A673 (cell line): ENCODE measurements at regions of chr10 and their contacts with region 1.

Region 1: DNA sequence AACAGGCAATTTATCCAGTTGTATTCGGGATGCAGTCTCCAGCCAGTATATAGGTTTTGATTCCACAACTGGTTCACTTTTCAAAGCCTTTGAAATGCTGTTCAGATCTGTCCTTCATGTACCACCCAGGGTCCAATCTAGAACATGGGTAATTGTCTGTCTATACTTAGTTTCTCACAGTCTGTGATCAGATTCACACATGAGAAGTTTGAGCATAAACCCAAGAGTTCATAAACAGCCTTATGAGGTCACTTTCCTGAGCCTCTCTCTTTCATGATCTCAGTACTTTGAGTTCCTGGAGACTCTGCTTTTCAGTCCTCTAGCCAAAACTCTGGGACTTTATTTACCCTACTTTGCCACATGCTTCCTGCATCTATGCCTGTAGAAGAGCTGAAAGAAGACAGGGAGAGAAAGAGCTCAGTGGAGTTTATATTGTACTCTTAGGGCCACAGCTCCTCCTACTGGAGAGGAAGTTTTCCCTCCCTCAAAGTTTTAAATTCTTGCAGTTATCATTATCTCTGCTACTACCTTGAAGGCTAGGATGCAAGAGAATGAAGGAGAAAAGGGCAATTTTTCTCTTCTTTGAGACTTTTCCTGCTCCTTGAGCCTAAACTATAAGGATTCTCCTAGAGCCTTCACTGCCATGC is 172.0 kb downstream of the ZEB1 start:
- DNase-seq: peak; percentile 62
- H3K4me3 ChIP-seq: no peak overlapping the region
- H3K27ac ChIP-seq: no peak overlapping the region
- H3K4me1 ChIP-seq: no peaks in the 10 kb centered on the region
- H3K27me3 ChIP-seq: no peaks in the 10 kb centered on the region
- CTCF ChIP-seq: peak; percentile 67

Region 2: DNA sequence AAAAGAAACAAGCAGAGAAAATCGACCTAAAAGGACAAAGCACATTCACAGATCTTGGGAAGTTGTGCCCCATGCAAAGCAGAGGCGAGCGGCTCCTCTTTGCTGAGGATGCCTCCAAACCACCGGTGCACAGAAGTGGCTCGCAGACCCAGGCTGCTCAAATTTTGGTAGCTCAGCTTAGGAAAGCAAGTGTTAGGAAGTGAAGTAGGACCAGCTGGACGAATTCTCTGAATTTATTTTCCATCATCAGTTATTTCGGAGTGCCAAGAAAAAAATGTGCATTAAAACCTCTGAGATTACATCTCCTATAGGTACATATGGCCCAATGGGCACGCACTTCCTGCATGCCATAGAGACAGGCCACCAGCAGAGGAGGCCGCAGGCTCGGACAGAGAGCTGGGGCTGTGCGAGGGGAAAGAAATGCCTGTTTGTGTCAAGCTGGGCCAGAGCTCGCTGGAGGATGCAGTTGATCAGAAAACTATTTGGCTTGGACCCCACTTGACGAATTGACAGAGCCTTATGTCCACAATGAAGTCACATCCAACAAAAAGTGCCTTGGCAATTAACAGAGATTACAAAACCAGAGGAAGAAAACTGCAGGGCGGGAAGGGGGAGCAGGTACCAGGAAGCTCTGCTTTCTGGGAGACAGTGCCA is 739.2 kb before region 1 on chr10:
- CTCF ChIA-PET with region 1: interaction called, 17 read pairs
- POLR2A ChIA-PET with region 1: no interaction called
- intact Hi-C with region 1: loop called (anchors 10 kb)
- DNase-seq: peak; percentile 80
- H3K4me3 ChIP-seq: no peak overlapping the region
- H3K27ac ChIP-seq: no peak overlapping the region
- H3K4me1 ChIP-seq: no peaks in the 10 kb centered on the region
- H3K27me3 ChIP-seq: no peaks in the 10 kb centered on the region
- CTCF ChIP-seq: peak; percentile 97

Region 3: DNA sequence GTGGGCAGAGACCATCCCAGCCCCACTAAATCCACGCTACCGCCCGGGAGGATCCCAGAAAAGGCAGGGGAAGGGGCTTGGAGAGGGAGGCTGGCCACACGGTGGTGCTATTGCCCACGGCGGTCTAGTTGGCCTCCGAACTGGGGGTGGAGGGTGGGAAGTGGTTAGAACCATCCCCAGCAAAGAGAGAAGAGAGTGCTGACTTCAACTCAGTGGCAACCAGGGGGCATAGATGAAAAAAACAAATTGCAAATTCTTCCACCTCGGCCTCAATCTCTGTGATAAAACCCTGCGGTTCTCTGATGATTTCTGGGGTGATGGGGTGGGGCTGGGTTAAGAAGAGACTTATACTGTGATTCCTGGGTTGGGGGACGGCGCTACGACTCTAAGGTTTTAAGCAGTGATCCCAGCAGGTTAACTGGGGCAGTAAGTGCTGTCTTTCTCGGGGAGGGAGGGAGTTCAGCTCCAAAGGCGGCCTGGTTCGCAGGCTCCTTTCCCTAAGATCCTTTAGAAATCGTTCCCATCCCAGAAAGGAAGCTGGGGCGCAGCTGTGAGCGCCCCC is 707.0 kb before region 1 on chr10:
- CTCF ChIA-PET with region 1: interaction called, 12 read pairs
- POLR2A ChIA-PET with region 1: no interaction called
- intact Hi-C with region 1: loop called (anchors 1 kb)
- DNase-seq: peak; percentile 88
- H3K4me3 ChIP-seq: peak overlapping the region; percentile 56
- H3K27ac ChIP-seq: no peak overlapping the region
- H3K4me1 ChIP-seq: no peaks in the 10 kb centered on the region
- H3K27me3 ChIP-seq: no peaks in the 10 kb centered on the region
- CTCF ChIP-seq: peak; percentile 94

Region 4: GRCh38 chr10:31083765-31084184 is 407.2 kb before region 1 on chr10:
- CTCF ChIA-PET with region 1: no interaction called
- POLR2A ChIA-PET with region 1: no interaction called
- intact Hi-C with region 1: loop called (anchors 2 kb)
- DNase-seq: peak; percentile 79
- H3K4me3 ChIP-seq: no peak overlapping the region
- H3K27ac ChIP-seq: no peak overlapping the region
- H3K4me1 ChIP-seq: no peaks in the 10 kb centered on the region
- H3K27me3 ChIP-seq: no peaks in the 10 kb centered on the region
- CTCF ChIP-seq: peak; percentile 73

Region 5: DNA sequence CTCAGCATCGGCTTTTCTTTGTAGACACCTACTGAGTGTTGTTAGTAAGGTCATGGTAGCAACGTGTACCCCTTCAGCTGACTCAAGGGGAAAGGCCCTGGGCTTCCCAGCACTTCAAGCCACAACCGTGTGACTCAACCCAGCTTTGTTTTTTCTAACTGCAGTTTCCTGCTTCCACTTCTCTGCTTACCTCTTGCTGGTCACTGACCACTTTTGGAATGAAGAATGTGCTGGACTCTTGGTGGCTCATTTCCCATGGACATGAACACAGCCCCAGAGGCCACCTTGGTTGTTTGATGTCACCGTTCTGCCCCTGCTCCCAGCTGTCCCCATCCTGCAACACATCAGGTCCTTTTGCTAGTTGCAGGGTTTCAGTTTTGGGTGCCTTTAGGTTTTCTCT is 389.9 kb before region 1 on chr10:
- CTCF ChIA-PET with region 1: no interaction called
- POLR2A ChIA-PET with region 1: no interaction called
- intact Hi-C with region 1: no loop called
- DNase-seq: no peak
- H3K4me3 ChIP-seq: no peak overlapping the region
- H3K27ac ChIP-seq: no peak overlapping the region
- H3K4me1 ChIP-seq: no peaks in the 10 kb centered on the region
- H3K27me3 ChIP-seq: no peaks in the 10 kb centered on the region
- CTCF ChIP-seq: no peak

Region 6: DNA sequence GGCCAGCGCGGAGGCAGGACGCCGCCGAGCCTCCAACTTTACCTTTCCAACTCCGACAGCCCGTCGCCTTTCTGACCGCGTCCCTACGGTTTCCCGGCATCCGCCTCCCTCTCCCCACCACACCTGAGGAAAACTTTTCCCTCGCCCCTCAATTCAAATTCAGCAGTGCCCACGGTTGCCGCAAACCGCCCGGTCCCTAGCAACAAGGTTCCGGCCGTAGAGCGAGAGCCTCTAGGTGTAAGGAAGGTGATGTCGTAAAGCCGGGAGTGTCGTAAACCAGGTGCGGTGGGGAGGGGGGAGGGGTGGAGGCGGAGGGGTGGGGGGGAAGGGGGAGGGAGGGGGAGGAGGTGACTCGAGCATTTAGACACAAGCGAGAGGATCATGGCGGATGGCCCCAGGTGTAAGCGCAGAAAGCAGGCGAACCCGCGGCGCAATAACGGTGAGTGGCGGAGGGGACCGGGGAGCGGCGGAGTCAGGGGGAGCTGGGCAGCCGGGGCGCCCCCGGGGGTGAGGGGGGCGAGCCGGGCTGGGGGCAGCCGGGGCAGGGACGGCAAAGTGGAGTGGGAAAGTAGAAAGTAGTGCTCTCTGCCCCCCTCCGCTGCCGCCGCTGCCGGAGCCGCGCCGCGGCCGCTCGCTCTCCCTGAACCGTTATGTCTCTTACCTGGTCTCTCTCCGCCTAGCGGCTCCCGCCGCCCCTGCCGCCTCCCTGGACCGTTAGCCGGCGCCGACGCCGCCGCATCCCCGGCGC is 172.0 kb before region 1 on chr10 and contains the start of gene ZEB1:
- CTCF ChIA-PET with region 1: no interaction called
- POLR2A ChIA-PET with region 1: no interaction called
- intact Hi-C with region 1: loop called (anchors 10 kb)
- DNase-seq: peak; percentile 86
- H3K4me3 ChIP-seq: peak within 1 kb of the TSS; percentile 68
- H3K27ac ChIP-seq: peak within 1 kb of the TSS; percentile 21
- H3K4me1 ChIP-seq: peaks cover 15% of the 10 kb centered on the region
- H3K27me3 ChIP-seq: peaks cover 43% of the 10 kb centered on the region
- CTCF ChIP-seq: 0 out of 2 replicates have a peak, but pooled peaks have one; percentile 22
- total RNA-seq, gene ZEB1: 8.3 and 10.3 TPM in 2 replicates

Region 7: GRCh38 chr10:31340343-31340742 is 150.6 kb before region 1 on chr10:
- CTCF ChIA-PET with region 1: no interaction called
- POLR2A ChIA-PET with region 1: no interaction called
- intact Hi-C with region 1: no loop called
- DNase-seq: no peak
- H3K4me3 ChIP-seq: no peak overlapping the region
- H3K27ac ChIP-seq: no peak overlapping the region
- H3K4me1 ChIP-seq: no peaks in the 10 kb centered on the region
- H3K27me3 ChIP-seq: no peaks in the 10 kb centered on the region
- CTCF ChIP-seq: no peak

Region 8: GRCh38 chr10:32073659-32074058 is 582.7 kb after region 1 on chr10:
- CTCF ChIA-PET with region 1: no interaction called
- POLR2A ChIA-PET with region 1: no interaction called
- intact Hi-C with region 1: no loop called
- DNase-seq: no peak
- H3K4me3 ChIP-seq: no peak overlapping the region
- H3K27ac ChIP-seq: no peak overlapping the region
- H3K4me1 ChIP-seq: no peaks in the 10 kb centered on the region
- H3K27me3 ChIP-seq: no peaks in the 10 kb centered on the region
- CTCF ChIP-seq: no peak

Region 9: DNA sequence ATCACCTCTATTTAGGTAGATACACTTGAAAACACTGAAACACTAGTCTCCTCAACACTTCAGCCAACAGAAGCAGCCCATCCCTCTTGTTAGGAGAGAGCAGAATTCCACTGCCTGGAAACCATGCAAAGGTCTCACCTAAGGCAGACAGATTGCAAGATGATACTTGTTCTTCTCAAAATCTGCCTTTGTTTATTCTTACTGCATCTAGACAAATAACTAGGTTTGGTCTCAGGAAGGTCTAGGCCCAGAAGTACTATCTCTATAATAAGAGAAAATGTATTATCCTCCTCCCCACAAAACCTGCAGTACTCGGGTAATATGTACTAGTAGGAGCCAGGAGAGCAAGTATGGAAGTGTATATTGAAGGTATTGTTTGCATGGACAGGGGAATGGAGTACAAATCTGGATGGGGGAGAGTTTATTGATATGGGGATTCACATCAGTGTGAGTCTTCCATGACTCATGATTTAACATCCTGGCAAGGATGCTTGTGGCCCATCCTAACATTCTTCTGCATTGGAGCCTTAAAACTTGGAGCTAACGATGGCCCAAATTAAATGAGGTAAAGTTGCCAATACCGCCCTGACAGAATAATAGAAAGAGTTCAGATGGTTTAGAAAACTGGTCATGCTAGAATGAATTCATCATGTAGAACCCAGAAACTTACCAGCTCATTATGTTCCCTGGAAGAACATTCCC is 746.8 kb after region 1 on chr10:
- CTCF ChIA-PET with region 1: no interaction called
- POLR2A ChIA-PET with region 1: no interaction called
- intact Hi-C with region 1: no loop called
- DNase-seq: no peak
- H3K4me3 ChIP-seq: no peak overlapping the region
- H3K27ac ChIP-seq: no peak overlapping the region
- H3K4me1 ChIP-seq: no peaks in the 10 kb centered on the region
- H3K27me3 ChIP-seq: no peaks in the 10 kb centered on the region
- CTCF ChIP-seq: no peak